ENCODE measurements at regions of chr6 and their contacts with region 1.

Region 1: GRCh38 chr6:24581084-24581669 is 64.8 kb downstream of the KIAA0319 start:
- DNase-seq: peak; percentile 79
- H3K4me3 Mint-ChIP-seq: no peak overlapping the region
- H3K27ac Mint-ChIP-seq: no peak overlapping the region
- H3K4me1 Mint-ChIP-seq: peaks cover 10% of the 10 kb centered on the region
- H3K27me3 Mint-ChIP-seq: peaks cover under 1% of the 10 kb centered on the region
- CTCF ChIP-seq: peak; percentile 62

Region 2: DNA sequence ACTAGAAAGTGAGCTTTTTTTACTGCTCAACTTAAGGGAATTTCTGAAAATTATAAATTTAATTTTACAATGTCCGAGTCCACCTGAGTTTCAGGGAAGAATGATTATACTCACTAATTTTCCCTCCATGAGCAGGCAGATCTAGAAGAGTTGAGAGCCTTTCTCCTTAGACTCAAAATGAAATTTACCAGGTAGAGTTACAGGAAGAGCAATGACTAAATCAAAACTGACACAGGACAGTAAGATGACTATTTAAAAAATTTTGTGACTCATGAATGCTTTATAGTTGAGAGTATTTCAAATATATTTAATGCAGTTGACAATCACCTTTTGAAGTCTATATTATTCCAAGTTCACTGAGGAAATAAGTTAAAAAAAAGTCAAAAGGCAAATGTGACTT is 653.2 kb before region 1 on chr6:
- CTCF ChIA-PET with region 1: no interaction called
- POLR2A ChIA-PET with region 1: no interaction called
- intact Hi-C with region 1: no loop called
- DNase-seq: no peak
- H3K4me3 Mint-ChIP-seq: no peak overlapping the region
- H3K27ac Mint-ChIP-seq: no peak overlapping the region
- H3K4me1 Mint-ChIP-seq: no peaks in the 10 kb centered on the region
- H3K27me3 Mint-ChIP-seq: no peaks in the 10 kb centered on the region
- CTCF ChIP-seq: no peak

Region 3: GRCh38 chr6:24283043-24283985 is 297.9 kb before region 1 on chr6:
- CTCF ChIA-PET with region 1: interaction called, 3 read pairs
- POLR2A ChIA-PET with region 1: no interaction called
- intact Hi-C with region 1: loop called (anchors 5 kb)
- DNase-seq: peak; percentile 82
- H3K4me3 Mint-ChIP-seq: peak overlapping the region; percentile 52
- H3K27ac Mint-ChIP-seq: no peak overlapping the region
- H3K4me1 Mint-ChIP-seq: no peaks in the 10 kb centered on the region
- H3K27me3 Mint-ChIP-seq: peaks cover 13% of the 10 kb centered on the region
- CTCF ChIP-seq: peak; percentile 75

Region 4: GRCh38 chr6:24566020-24566767 is 15.0 kb before region 1 on chr6:
- CTCF ChIA-PET with region 1: interaction called, 34 read pairs
- POLR2A ChIA-PET with region 1: no interaction called
- intact Hi-C with region 1: no loop called
- DNase-seq: no peak
- H3K4me3 Mint-ChIP-seq: no peak overlapping the region
- H3K27ac Mint-ChIP-seq: no peak overlapping the region
- H3K4me1 Mint-ChIP-seq: no peaks in the 10 kb centered on the region
- H3K27me3 Mint-ChIP-seq: no peaks in the 10 kb centered on the region
- CTCF ChIP-seq: no peak

Region 5: DNA sequence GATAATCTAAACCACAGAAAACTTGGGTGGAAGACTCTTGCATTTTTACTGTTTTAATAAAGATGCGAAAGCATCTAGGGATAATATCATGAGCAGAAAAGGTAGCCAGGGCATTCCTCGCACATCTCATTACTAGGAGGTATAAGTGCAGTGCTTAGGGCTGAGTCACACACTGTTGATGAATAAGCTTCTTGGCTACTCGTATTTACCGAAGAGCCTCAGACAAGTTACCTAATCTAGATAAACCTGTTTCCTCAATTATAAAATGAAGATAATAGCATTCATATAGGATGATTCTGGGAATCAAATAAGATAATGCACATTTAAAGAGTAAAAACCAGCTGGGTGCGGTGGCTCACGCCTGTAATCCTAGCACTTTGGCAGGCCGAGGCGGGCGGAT is 65.6 kb after region 1 on chr6:
- CTCF ChIA-PET with region 1: interaction called, 4 read pairs
- POLR2A ChIA-PET with region 1: interaction called, 3 read pairs
- intact Hi-C with region 1: loop called (anchors 10 kb)
- DNase-seq: peak; percentile 44
- H3K4me3 Mint-ChIP-seq: peak overlapping the region; percentile 74
- H3K27ac Mint-ChIP-seq: no peak overlapping the region
- H3K4me1 Mint-ChIP-seq: peaks cover 18% of the 10 kb centered on the region
- H3K27me3 Mint-ChIP-seq: peaks cover 10% of the 10 kb centered on the region
- CTCF ChIP-seq: no peak

Region 6: GRCh38 chr6:24683297-24684296 is 102.4 kb after region 1 on chr6:
- CTCF ChIA-PET with region 1: interaction called, 25 read pairs
- POLR2A ChIA-PET with region 1: no interaction called
- intact Hi-C with region 1: no loop called
- DNase-seq: no peak
- H3K4me3 Mint-ChIP-seq: no peak overlapping the region
- H3K27ac Mint-ChIP-seq: no peak overlapping the region
- H3K4me1 Mint-ChIP-seq: no peaks in the 10 kb centered on the region
- H3K27me3 Mint-ChIP-seq: no peaks in the 10 kb centered on the region
- CTCF ChIP-seq: no peak

Region 7: DNA sequence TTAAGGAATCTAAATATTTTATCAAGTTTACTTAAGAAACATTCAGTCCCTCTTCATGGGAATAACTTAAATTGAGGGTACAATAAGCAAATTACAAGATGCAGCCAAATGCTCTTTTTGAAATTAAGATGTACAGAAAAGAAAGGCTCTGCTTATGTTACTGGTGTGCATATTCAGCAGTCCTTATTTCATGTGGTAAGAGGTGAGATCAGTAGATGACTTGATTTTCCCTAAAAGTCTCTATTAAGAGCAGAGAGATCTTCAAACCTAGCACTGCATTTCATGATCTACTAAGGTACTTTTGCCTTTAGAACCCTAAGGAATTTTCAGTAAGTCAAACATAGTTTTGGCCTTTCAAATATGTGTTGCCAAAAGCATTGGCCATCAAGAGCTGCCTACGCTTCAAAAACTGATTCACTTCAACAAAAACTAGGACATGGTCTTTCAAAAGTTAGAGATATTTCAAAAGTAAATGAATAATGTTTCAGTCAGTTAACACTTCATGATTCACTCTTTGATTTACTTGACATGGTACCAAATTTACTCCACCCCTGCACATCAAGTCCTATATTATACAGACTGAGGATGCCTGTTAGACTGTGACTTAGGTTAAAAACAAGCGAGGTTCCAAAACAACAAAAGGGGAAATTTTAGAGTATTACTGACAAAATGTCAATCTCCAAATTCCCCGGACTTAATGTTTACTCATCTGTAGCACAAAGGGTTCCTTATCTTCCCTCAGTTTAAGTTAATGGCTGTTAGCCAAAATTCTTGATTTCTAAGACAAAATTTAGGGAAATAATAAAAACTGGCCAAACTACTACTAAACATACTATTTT is 118.6 kb after region 1 on chr6:
- CTCF ChIA-PET with region 1: interaction called, 33 read pairs
- POLR2A ChIA-PET with region 1: interaction called, 3 read pairs
- intact Hi-C with region 1: loop called (anchors 1 kb)
- DNase-seq: no peak
- H3K4me3 Mint-ChIP-seq: no peak overlapping the region
- H3K27ac Mint-ChIP-seq: no peak overlapping the region
- H3K4me1 Mint-ChIP-seq: peaks cover 9% of the 10 kb centered on the region
- H3K27me3 Mint-ChIP-seq: no peaks in the 10 kb centered on the region
- CTCF ChIP-seq: no peak

Region 8: DNA sequence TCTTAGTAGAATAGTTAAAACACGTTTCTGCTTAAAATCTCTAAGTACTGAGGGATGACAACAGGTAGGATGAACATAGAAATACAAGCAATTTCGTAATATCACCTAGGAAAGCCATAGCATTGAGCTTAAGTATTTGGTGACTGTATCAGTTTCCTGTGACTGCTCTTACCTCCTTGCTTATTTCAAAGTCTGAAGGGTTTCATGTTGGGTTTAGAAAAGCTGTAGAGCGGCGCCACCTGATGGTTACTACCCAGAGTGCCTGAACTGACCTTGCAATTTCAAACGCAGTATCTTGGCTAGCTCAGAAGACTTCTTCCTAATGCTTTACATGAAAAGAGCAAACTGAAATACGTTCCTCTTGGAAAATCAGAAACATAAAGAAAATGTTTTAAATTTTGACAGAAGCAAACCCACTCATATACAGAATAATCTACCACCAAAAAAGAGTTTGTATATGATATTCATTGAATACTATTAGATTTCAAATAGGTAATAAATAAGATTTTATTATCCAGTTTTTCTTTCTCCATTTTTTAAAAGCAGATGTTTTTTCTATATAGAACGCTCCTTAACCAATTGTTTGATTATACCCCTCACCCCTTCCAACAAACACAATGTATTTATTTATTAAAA is 436.9 kb after region 1 on chr6:
- CTCF ChIA-PET with region 1: no interaction called
- POLR2A ChIA-PET with region 1: no interaction called
- intact Hi-C with region 1: loop called (anchors 1 kb)
- DNase-seq: peak; percentile 88
- H3K4me3 Mint-ChIP-seq: peak overlapping the region; percentile 22
- H3K27ac Mint-ChIP-seq: peak overlapping the region; percentile 62
- H3K4me1 Mint-ChIP-seq: peaks cover 38% of the 10 kb centered on the region
- H3K27me3 Mint-ChIP-seq: no peaks in the 10 kb centered on the region
- CTCF ChIP-seq: peak; percentile 87